ENCODE measurements at regions of chr19 and their contacts with region 1.

Region 1: GRCh38 chr19:34404109-34404897 is at the start of gene PDCD2L:
- DNase-seq: peak; percentile 78 to 97 (median 90)
- ATAC-seq: peak; percentile 96 to 97 (median 96)
- H3K4me3 ChIP-seq: peak within 1 kb of the TSS; percentile 90 to 99
- H3K4me3 Mint-ChIP-seq: peak within 1 kb of the TSS; percentile 90 to 93 (median 91)
- H3K27ac ChIP-seq: peak within 1 kb of the TSS; percentile 61
- H3K27ac Mint-ChIP-seq: peak within 1 kb of the TSS; percentile 86
- H3K4me1 ChIP-seq: peaks cover 2 to 26% of the 10 kb centered on the region in 2 experiments
- H3K4me1 Mint-ChIP-seq: peaks cover 22 to 31% (median 27%) of the 10 kb centered on the region in 3 donors
- H3K27me3 ChIP-seq: no peaks in the 10 kb centered on the region
- H3K27me3 Mint-ChIP-seq: no peaks in the 10 kb centered on the region
- total RNA-seq, gene PDCD2L: 9.4 to 14.8 (median 14.2) TPM

Region 2: DNA sequence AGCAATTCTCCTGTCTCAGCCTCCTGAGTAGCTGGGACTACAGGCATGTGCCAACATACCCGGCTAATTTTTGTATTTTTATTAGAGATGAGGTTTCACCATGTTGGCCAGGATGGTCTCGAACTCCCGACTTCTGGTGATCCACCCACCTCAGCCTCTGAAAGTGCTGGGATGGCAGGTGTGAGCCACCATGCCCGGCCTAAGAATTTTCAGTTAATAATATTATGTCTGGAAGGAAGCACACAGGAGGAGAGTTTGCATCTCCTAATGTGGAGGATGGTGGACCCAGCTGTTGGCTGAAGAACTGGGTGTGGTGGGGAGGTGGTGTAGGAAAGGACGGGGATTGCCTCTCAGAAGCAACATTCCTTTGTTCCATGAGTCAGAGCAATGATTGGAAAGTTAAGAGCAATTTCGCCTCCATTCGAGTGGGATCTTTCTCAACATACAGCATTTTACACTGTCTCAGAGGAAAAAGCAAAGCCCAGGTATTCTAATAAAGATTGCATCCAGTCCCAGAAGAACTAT is 11.8 kb after region 1 on chr19:
- CTCF ChIA-PET with region 1: interaction called in 1 of 2 experiments, 15 read pairs
- POLR2A ChIA-PET with region 1: no interaction called
- DNase-seq: no peak
- ATAC-seq: no peak
- H3K4me3 ChIP-seq: no peak overlapping the region
- H3K4me3 Mint-ChIP-seq: no peak overlapping the region
- H3K27ac ChIP-seq: no peak overlapping the region
- H3K27ac Mint-ChIP-seq: no peak overlapping the region
- H3K4me1 ChIP-seq: no peaks in the 10 kb centered on the region
- H3K4me1 Mint-ChIP-seq: peaks cover 0 to 3% (median 0%) of the 10 kb centered on the region in 3 donors
- H3K27me3 ChIP-seq: no peaks in the 10 kb centered on the region
- H3K27me3 Mint-ChIP-seq: no peaks in the 10 kb centered on the region

Region 3: GRCh38 chr19:34525001-34525400 is 120.7 kb after region 1 on chr19:
- CTCF ChIA-PET with region 1: no interaction called
- POLR2A ChIA-PET with region 1: no interaction called
- DNase-seq: no peak
- ATAC-seq: no peak
- H3K4me3 ChIP-seq: no peak overlapping the region
- H3K4me3 Mint-ChIP-seq: no peak overlapping the region
- H3K27ac ChIP-seq: no peak overlapping the region
- H3K27ac Mint-ChIP-seq: no peak overlapping the region
- H3K4me1 ChIP-seq: no peaks in the 10 kb centered on the region
- H3K4me1 Mint-ChIP-seq: no peaks in the 10 kb centered on the region
- H3K27me3 ChIP-seq: peaks cover 0 to 2% of the 10 kb centered on the region in 2 experiments
- H3K27me3 Mint-ChIP-seq: peaks cover 32 to 35% of the 10 kb centered on the region in 2 donors

Region 4: GRCh38 chr19:35027009-35027408 is 622.7 kb after region 1 on chr19:
- CTCF ChIA-PET with region 1: no interaction called
- POLR2A ChIA-PET with region 1: no interaction called
- DNase-seq: no peak
- ATAC-seq: no peak
- H3K4me3 ChIP-seq: no peak overlapping the region
- H3K4me3 Mint-ChIP-seq: no peak overlapping the region
- H3K27ac ChIP-seq: no peak overlapping the region
- H3K27ac Mint-ChIP-seq: peak overlapping the region in 1 of 2 donors; percentile 13
- H3K4me1 ChIP-seq: peaks cover 2 to 15% of the 10 kb centered on the region in 2 experiments
- H3K4me1 Mint-ChIP-seq: peaks cover 9 to 12% (median 11%) of the 10 kb centered on the region in 3 donors
- H3K27me3 ChIP-seq: peaks cover 5 to 18% of the 10 kb centered on the region in 2 experiments
- H3K27me3 Mint-ChIP-seq: peaks cover 8% of the 10 kb centered on the region in 2 donors